CD8-positive, alpha-beta T cell (primary cell): ENCODE measurements at regions of chr20 and their contacts with region 1.

Region 1: DNA sequence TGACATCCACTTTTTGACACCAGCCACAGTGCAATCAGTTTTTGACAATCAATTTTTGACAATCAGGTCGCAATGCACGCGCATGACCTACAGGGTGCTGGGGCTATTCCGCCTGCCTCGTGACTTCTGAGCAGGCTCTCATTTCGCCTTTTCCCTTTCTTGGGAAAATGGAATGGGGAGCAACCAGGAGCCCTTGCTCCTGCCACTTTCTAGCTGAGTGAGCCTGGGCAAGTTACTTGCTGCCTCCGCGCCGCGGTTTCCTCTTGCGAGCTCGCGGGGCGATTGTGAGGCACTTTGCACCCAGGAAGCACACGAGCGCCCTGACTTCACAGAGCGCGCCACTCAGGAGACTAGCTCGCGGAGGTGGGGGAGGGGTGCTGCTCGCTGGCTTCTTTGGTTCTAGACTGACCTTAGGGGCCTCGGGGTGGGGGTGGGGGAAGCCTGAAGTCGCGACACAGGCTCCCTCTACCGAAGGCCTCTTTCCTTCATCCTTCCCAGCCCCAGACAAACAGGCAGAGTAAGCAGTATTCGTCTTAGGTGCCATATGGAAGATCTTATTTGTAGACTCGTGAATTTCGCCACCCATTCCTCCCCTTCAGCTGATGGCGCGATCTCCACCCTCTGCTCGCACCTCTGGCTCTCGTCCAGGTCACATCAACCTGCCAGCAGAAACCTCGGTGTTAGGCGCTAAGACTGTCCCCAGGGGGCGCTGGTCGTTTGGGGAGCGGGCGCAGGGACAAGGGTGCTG is 4.6 kb downstream of the TP53TG5 start:
- DNase-seq: peak; percentile 81 to 94 (median 91)
- ATAC-seq: peak; percentile 89
- H3K4me3 ChIP-seq: peak overlapping the region; percentile 57 to 64
- H3K4me3 Mint-ChIP-seq: peak overlapping the region; percentile 89
- H3K27ac ChIP-seq: peak overlapping the region; percentile 51 to 85
- H3K27ac Mint-ChIP-seq: peak overlapping the region; percentile 91
- H3K4me1 ChIP-seq: peaks cover 14% of the 10 kb centered on the region
- H3K4me1 Mint-ChIP-seq: peaks cover 37% of the 10 kb centered on the region
- H3K27me3 ChIP-seq: no peaks in the 10 kb centered on the region
- H3K27me3 Mint-ChIP-seq: no peaks in the 10 kb centered on the region
- CTCF ChIP-seq: peak; percentile 90

Region 2: GRCh38 chr20:45392733-45393132 is 19.2 kb after region 1 on chr20:
- CTCF ChIA-PET with region 1: interaction called, 12 read pairs
- POLR2A ChIA-PET with region 1: no interaction called
- intact Hi-C with region 1: no loop called
- DNase-seq: no peak
- ATAC-seq: no peak
- H3K4me3 ChIP-seq: no peak overlapping the region
- H3K4me3 Mint-ChIP-seq: no peak overlapping the region
- H3K27ac ChIP-seq: no peak overlapping the region
- H3K27ac Mint-ChIP-seq: no peak overlapping the region
- H3K4me1 ChIP-seq: no peaks in the 10 kb centered on the region
- H3K4me1 Mint-ChIP-seq: no peaks in the 10 kb centered on the region
- H3K27me3 ChIP-seq: no peaks in the 10 kb centered on the region
- H3K27me3 Mint-ChIP-seq: no peaks in the 10 kb centered on the region
- CTCF ChIP-seq: no peak

Region 3: DNA sequence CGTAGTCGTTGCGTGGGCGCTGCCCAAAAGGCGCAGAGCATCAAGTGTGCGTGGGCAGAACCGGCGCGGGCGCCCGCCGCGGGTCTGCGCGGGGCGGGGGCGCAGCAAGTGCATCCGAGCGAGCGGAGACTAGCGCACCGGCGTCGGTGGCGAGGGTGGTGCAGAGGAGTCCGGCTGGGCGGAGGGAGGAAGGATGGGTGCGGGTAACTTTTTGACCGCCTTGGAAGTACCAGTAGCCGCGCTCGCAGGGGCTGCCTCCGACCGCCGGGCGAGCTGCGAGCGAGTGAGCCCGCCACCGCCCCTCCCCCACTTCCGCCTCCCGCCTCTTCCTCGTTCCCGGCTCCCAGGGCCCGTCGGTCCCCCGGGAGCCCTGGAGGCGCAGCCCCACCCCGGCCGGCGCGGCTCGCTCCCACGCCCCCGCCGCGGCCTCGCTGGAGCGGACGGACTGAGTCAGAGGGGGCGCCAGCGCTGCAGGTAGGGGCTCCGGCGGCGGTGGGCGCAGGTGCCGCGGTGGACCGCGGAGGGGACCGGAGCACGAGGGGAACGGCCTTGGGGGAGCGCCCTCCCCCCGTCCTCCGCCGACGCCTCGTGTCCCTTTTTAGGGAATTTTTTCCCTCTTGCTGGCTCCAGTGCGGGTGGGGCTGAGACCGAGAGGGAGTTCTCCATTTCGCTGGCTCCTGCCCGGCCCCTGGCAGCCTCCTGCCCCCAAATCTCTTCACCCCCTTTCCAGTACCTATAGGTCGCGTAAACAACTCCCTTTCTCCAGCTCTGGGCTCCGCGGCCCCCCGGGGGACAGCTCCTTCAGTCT is 32.9 kb after region 1 on chr20:
- CTCF ChIA-PET with region 1: interaction called, 36 read pairs
- POLR2A ChIA-PET with region 1: interaction called, 8 read pairs
- intact Hi-C with region 1: loop called (anchors 2 kb)
- DNase-seq: peak in 7 of 9 experiments; percentile 31 to 69 (median 46)
- ATAC-seq: peak; percentile 50
- H3K4me3 ChIP-seq: peak overlapping the region; percentile 66 to 73
- H3K4me3 Mint-ChIP-seq: peak overlapping the region; percentile 82
- H3K27ac ChIP-seq: peak overlapping the region; percentile 33 to 73
- H3K27ac Mint-ChIP-seq: peak overlapping the region; percentile 88
- H3K4me1 ChIP-seq: peaks cover 16% of the 10 kb centered on the region
- H3K4me1 Mint-ChIP-seq: peaks cover 23% of the 10 kb centered on the region
- H3K27me3 ChIP-seq: no peaks in the 10 kb centered on the region
- H3K27me3 Mint-ChIP-seq: no peaks in the 10 kb centered on the region
- CTCF ChIP-seq: no peak

Region 4: GRCh38 chr20:45415774-45416637 is 42.5 kb after region 1 on chr20 and contains the start of gene PIGT:
- CTCF ChIA-PET with region 1: interaction called, 17 read pairs
- POLR2A ChIA-PET with region 1: interaction called, 27 read pairs
- intact Hi-C with region 1: loop called (anchors 1 to 2 kb)
- DNase-seq: peak; percentile 77 to 98 (median 89)
- ATAC-seq: peak; percentile 96
- H3K4me3 ChIP-seq: peak within 1 kb of the TSS; percentile 87 to 98
- H3K4me3 Mint-ChIP-seq: peak within 1 kb of the TSS; percentile 94
- H3K27ac ChIP-seq: peak within 1 kb of the TSS; percentile 70 to 90
- H3K27ac Mint-ChIP-seq: peak within 1 kb of the TSS; percentile 96
- H3K4me1 ChIP-seq: peaks cover 15% of the 10 kb centered on the region
- H3K4me1 Mint-ChIP-seq: peaks cover 40% of the 10 kb centered on the region
- H3K27me3 ChIP-seq: no peaks in the 10 kb centered on the region
- H3K27me3 Mint-ChIP-seq: no peaks in the 10 kb centered on the region
- CTCF ChIP-seq: no peak
- total RNA-seq, gene PIGT: 213 to 230 TPM

Region 5: DNA sequence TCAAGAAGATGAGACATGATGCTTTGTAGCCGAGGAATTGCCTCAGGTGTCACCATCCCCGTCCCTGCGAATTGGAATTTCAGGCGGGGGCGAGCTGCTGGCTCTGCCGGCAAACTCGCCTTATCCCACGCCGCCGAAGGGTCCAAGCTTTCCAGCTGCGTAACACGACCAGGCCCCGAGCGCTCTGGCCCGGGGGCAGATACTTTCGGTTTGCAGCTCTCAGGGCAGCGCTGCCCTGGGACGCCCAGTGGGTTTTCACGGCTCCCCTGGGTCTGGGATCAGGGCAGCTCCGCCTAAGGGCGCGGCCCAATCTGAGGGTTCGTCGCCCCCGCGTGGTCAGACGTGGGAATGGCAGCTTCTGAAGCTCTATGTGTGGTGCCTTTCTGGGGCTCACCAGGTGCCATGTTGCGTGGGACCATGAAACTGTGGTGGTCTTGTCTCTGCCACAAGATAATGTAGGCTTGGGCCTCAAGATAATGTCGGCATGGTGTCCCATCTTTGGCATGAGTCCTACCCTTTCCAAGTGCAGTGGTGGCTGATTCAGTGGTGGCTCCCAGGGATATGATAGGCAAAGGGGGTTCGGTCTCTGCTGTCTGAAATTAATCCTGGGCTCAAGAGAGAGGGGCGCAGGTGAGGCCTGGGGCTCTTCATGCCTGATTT is 63.3 kb after region 1 on chr20:
- CTCF ChIA-PET with region 1: interaction called, 490 read pairs
- POLR2A ChIA-PET with region 1: interaction called, 35 read pairs
- intact Hi-C with region 1: loop called (anchors 1 kb)
- DNase-seq: peak; percentile 67 to 94 (median 90)
- ATAC-seq: peak; percentile 99
- H3K4me3 ChIP-seq: peak overlapping the region; percentile 56 to 60
- H3K4me3 Mint-ChIP-seq: peak overlapping the region; percentile 80
- H3K27ac ChIP-seq: peak overlapping the region in 1 of 2 experiments; percentile 53
- H3K27ac Mint-ChIP-seq: peak overlapping the region; percentile 32
- H3K4me1 ChIP-seq: peaks cover 15% of the 10 kb centered on the region
- H3K4me1 Mint-ChIP-seq: peaks cover 16% of the 10 kb centered on the region
- H3K27me3 ChIP-seq: no peaks in the 10 kb centered on the region
- H3K27me3 Mint-ChIP-seq: no peaks in the 10 kb centered on the region
- CTCF ChIP-seq: peak; percentile 84

Region 6: DNA sequence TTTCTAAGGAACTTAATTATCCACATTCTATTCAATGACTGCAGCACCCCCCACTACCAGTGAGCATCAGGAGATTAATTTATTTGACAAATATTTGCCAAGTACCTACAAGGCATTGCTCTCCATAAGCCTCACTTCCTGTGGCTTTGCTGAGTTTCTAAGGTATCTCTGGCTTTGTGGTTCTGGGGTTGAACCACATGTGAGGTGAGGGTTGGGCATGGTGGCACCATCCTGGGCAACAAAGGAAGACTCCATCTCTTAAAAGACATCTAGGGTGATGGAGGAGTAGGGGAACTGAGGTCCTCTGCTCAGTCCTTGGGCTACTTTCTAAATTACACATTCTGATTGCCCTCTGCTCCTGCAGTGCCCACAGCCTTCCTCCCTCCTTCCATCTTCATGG is 70.5 kb after region 1 on chr20:
- CTCF ChIA-PET with region 1: interaction called, 490 read pairs
- POLR2A ChIA-PET with region 1: no interaction called
- intact Hi-C with region 1: no loop called
- DNase-seq: peak in 5 of 9 experiments; percentile 15 to 68 (median 57)
- ATAC-seq: peak; percentile 58
- H3K4me3 ChIP-seq: no peak overlapping the region
- H3K4me3 Mint-ChIP-seq: no peak overlapping the region
- H3K27ac ChIP-seq: no peak overlapping the region
- H3K27ac Mint-ChIP-seq: no peak overlapping the region
- H3K4me1 ChIP-seq: peaks cover 19% of the 10 kb centered on the region
- H3K4me1 Mint-ChIP-seq: peaks cover 19% of the 10 kb centered on the region
- H3K27me3 ChIP-seq: no peaks in the 10 kb centered on the region
- H3K27me3 Mint-ChIP-seq: peaks cover 7% of the 10 kb centered on the region
- CTCF ChIP-seq: no peak

Region 7: GRCh38 chr20:45450097-45450818 is 76.7 kb after region 1 on chr20:
- CTCF ChIA-PET with region 1: interaction called, 35 read pairs
- POLR2A ChIA-PET with region 1: interaction called, 3 read pairs
- intact Hi-C with region 1: no loop called
- DNase-seq: peak in 2 of 9 experiments; percentile 56 to 66
- ATAC-seq: peak; percentile 52
- H3K4me3 ChIP-seq: no peak overlapping the region
- H3K4me3 Mint-ChIP-seq: no peak overlapping the region
- H3K27ac ChIP-seq: no peak overlapping the region
- H3K27ac Mint-ChIP-seq: no peak overlapping the region
- H3K4me1 ChIP-seq: no peaks in the 10 kb centered on the region
- H3K4me1 Mint-ChIP-seq: peaks cover under 1% of the 10 kb centered on the region
- H3K27me3 ChIP-seq: no peaks in the 10 kb centered on the region
- H3K27me3 Mint-ChIP-seq: peaks cover 7% of the 10 kb centered on the region
- CTCF ChIP-seq: peak; percentile 64

Region 8: GRCh38 chr20:45538209-45538799 is 164.8 kb after region 1 on chr20:
- CTCF ChIA-PET with region 1: no interaction called
- POLR2A ChIA-PET with region 1: no interaction called
- intact Hi-C with region 1: no loop called
- DNase-seq: no peak
- ATAC-seq: no peak
- H3K4me3 ChIP-seq: no peak overlapping the region
- H3K4me3 Mint-ChIP-seq: no peak overlapping the region
- H3K27ac ChIP-seq: no peak overlapping the region
- H3K27ac Mint-ChIP-seq: no peak overlapping the region
- H3K4me1 ChIP-seq: no peaks in the 10 kb centered on the region
- H3K4me1 Mint-ChIP-seq: no peaks in the 10 kb centered on the region
- H3K27me3 ChIP-seq: no peaks in the 10 kb centered on the region
- H3K27me3 Mint-ChIP-seq: peaks cover 38% of the 10 kb centered on the region
- CTCF ChIP-seq: no peak